ENCODE measurements at regions of chr14 and their contacts with region 1.

Region 1: GRCh38 chr14:78181270-78181669 is 11.1 kb downstream of the NRXN3 start:
- DNase-seq: no peak
- ATAC-seq: no peak
- H3K4me3 ChIP-seq: no peak overlapping the region
- H3K27ac ChIP-seq: no peak overlapping the region
- H3K4me1 ChIP-seq: no peaks in the 10 kb centered on the region
- H3K27me3 ChIP-seq: no peaks in the 10 kb centered on the region
- CTCF ChIP-seq: no peak
- POLR2A ChIP-seq: no peak
- RAD21 ChIP-seq: no peak

Region 2: GRCh38 chr14:77980475-77981321 is 200.6 kb before region 1 on chr14:
- CTCF ChIA-PET with region 1: no interaction called
- POLR2A ChIA-PET with region 1: no interaction called
- dilution Hi-C with region 1: no loop called
- in situ Hi-C with region 1: no loop called
- intact Hi-C with region 1: no loop called
- DNase-seq: no peak
- ATAC-seq: no peak
- H3K4me3 ChIP-seq: no peak overlapping the region
- H3K27ac ChIP-seq: no peak overlapping the region
- H3K4me1 ChIP-seq: no peaks in the 10 kb centered on the region
- H3K27me3 ChIP-seq: peaks cover 2% of the 10 kb centered on the region; the same call in 1 of the 2 replicates
- CTCF ChIP-seq: no peak
- POLR2A ChIP-seq: no peak
- RAD21 ChIP-seq: no peak

Region 3: GRCh38 chr14:78220273-78220672 is 39.0 kb after region 1 on chr14:
- CTCF ChIA-PET with region 1: no interaction called
- POLR2A ChIA-PET with region 1: interaction called, 10 read pairs
- dilution Hi-C with region 1: no loop called
- in situ Hi-C with region 1: no loop called
- intact Hi-C with region 1: no loop called
- DNase-seq: no peak
- ATAC-seq: no peak
- H3K4me3 ChIP-seq: no peak overlapping the region
- H3K27ac ChIP-seq: no peak overlapping the region
- H3K4me1 ChIP-seq: no peaks in the 10 kb centered on the region
- H3K27me3 ChIP-seq: no peaks in the 10 kb centered on the region
- CTCF ChIP-seq: no peak
- POLR2A ChIP-seq: no peak
- RAD21 ChIP-seq: no peak

Region 4: DNA sequence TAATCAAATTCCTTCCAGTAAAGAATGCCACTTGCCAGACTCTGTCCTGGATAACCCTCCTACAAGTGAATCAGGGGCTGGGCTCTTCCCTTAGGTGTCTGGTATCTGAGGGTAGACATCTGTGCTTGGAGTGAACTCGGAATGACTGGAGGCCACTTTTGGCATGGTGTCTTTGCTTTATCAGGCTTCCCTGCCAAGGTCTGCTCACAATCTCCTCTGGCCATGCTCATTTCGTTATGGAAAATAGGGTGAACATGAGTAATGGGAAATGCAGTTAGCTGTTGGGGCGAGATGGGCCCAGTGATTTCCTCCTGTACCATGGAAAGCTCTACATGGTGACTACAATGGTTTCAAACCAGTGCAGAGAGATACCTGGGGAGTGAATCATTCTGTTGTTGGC is 201.8 kb after region 1 on chr14:
- CTCF ChIA-PET with region 1: no interaction called
- POLR2A ChIA-PET with region 1: no interaction called
- dilution Hi-C with region 1: no loop called
- in situ Hi-C with region 1: no loop called
- intact Hi-C with region 1: no loop called
- DNase-seq: no peak
- ATAC-seq: no peak
- H3K4me3 ChIP-seq: no peak overlapping the region
- H3K27ac ChIP-seq: no peak overlapping the region
- H3K4me1 ChIP-seq: no peaks in the 10 kb centered on the region
- H3K27me3 ChIP-seq: no peaks in the 10 kb centered on the region
- CTCF ChIP-seq: no peak
- POLR2A ChIP-seq: no peak
- RAD21 ChIP-seq: no peak

Measured in IMR-90 (cell line).